Activated naive CD4-positive, alpha-beta T cell treated with anti-CD3 and anti-CD28 coated beads for 36 hours (primary cell): ENCODE measurements at regions of chr20 and their contacts with region 1.

Region 1: GRCh38 chr20:54284934-54285704 is 77.2 kb downstream of the PFDN4 start:
- DNase-seq: peak; percentile 72
- H3K4me3 Mint-ChIP-seq: peak overlapping the region; percentile 85
- H3K27ac Mint-ChIP-seq: peak overlapping the region; percentile 99
- H3K4me1 Mint-ChIP-seq: peaks cover 29% of the 10 kb centered on the region
- H3K27me3 Mint-ChIP-seq: no peaks in the 10 kb centered on the region

Region 2: GRCh38 chr20:53594068-53595017 is 690.8 kb before region 1 on chr20:
- CTCF ChIA-PET with region 1: no interaction called
- intact Hi-C with region 1: loop called (anchors 10 kb)
- DNase-seq: peak; percentile 96
- H3K4me3 Mint-ChIP-seq: peak overlapping the region; percentile 94
- H3K27ac Mint-ChIP-seq: peak overlapping the region; percentile 99
- H3K4me1 Mint-ChIP-seq: peaks cover 51% of the 10 kb centered on the region
- H3K27me3 Mint-ChIP-seq: no peaks in the 10 kb centered on the region

Region 3: GRCh38 chr20:54207743-54208547 is 77.2 kb before region 1 on chr20 and contains the start of gene PFDN4:
- CTCF ChIA-PET with region 1: no interaction called
- intact Hi-C with region 1: loop called (anchors 1 kb)
- DNase-seq: peak; percentile 86
- H3K4me3 Mint-ChIP-seq: peak within 1 kb of the TSS; percentile 90
- H3K27ac Mint-ChIP-seq: peak within 1 kb of the TSS; percentile 98
- H3K4me1 Mint-ChIP-seq: peaks cover 42% of the 10 kb centered on the region
- H3K27me3 Mint-ChIP-seq: no peaks in the 10 kb centered on the region
- total RNA-seq, gene PFDN4: 48.8 to 53.3 TPM

Region 4: DNA sequence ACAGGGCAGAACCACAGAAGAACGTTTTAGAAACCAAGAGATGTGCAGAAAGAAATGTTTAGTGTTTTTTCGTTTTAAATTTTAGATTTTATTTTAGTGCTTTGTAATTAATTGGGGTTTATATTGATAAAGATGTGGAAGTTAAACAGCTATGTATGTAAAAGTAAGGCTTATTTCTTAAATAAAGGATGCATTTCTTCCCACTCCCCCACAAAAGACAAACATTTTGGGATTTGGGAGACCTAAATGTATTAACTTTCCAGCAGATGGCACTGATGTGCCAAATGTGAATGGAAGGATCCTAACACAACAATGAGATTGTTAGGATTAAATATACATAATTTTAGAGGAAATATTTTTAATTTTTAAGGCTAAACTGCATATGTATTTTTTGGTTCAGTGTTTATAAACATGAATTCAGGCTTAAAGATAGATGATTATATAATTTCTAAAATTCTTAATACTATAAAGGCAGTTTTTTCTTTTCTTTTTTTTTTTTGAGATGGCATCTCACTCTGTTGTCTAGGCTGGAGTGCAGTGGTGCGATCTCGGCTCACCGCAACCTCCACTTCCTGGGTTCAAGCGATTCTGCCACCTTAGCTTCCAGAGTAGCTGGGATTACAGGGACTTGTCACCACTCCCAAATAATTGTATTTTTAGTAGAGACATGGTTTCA is 65.2 kb before region 1 on chr20:
- CTCF ChIA-PET with region 1: no interaction called
- intact Hi-C with region 1: loop called (anchors 1 kb)
- DNase-seq: peak; percentile 33
- H3K4me3 Mint-ChIP-seq: no peak overlapping the region
- H3K27ac Mint-ChIP-seq: peak overlapping the region; percentile 85
- H3K4me1 Mint-ChIP-seq: peaks cover 40% of the 10 kb centered on the region
- H3K27me3 Mint-ChIP-seq: no peaks in the 10 kb centered on the region

Region 5: DNA sequence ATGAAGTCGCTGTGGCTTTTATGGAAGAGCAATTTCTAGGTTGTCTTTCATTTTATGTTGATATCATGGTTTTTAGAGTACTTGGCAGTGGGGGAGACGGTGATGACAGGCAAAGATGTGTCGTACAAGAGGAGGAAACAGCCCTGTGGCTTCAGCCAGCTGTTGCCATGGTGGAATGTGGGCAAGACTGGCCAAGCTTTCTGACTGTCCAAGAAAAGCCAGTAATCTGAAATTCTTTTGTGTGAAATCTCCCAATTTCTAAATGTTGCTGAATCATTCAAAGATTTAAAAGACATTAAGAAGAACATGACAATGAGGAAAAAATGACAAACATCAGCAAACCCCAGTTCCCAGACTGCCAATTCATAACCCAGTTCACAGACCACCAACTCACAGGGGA is 54.1 kb before region 1 on chr20:
- CTCF ChIA-PET with region 1: no interaction called
- intact Hi-C with region 1: no loop called
- DNase-seq: no peak
- H3K4me3 Mint-ChIP-seq: no peak overlapping the region
- H3K27ac Mint-ChIP-seq: no peak overlapping the region
- H3K4me1 Mint-ChIP-seq: peaks cover 2% of the 10 kb centered on the region
- H3K27me3 Mint-ChIP-seq: peaks cover 4% of the 10 kb centered on the region

Region 6: DNA sequence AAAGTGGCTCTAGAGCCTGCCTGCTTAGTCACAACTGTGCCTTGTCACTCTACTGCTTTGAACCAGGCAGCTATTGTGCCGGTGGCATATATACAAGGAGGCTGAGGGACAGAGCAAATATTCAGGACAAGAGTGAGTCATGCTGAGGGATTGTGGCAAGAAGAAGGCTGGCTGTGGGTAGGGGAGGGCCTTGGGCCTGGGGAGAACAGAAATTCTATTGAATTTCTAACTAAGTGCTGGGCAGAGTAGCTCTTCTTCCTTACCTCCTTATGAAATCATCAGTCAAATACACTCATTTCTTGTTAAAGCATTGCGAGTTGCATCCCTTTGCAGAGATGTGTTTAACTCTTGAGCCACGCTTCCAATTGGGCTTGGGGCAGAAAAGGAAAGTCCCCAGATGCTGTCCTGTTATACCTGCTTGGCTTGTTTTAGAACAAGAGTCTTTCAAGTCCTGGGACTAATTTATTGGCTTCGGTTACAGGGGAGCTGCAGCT is 17.6 kb before region 1 on chr20:
- CTCF ChIA-PET with region 1: interaction called, 3 read pairs
- intact Hi-C with region 1: loop called (anchors 1 kb)
- DNase-seq: peak; percentile 10
- H3K4me3 Mint-ChIP-seq: no peak overlapping the region
- H3K27ac Mint-ChIP-seq: no peak overlapping the region
- H3K4me1 Mint-ChIP-seq: peaks cover 30% of the 10 kb centered on the region
- H3K27me3 Mint-ChIP-seq: peaks cover 13% of the 10 kb centered on the region

Region 7: GRCh38 chr20:54295686-54296085 is 10.6 kb after region 1 on chr20:
- CTCF ChIA-PET with region 1: no interaction called
- intact Hi-C with region 1: no loop called
- DNase-seq: no peak
- H3K4me3 Mint-ChIP-seq: no peak overlapping the region
- H3K27ac Mint-ChIP-seq: no peak overlapping the region
- H3K4me1 Mint-ChIP-seq: peaks cover 26% of the 10 kb centered on the region
- H3K27me3 Mint-ChIP-seq: peaks cover 44% of the 10 kb centered on the region

Region 8: GRCh38 chr20:54312557-54312956 is 27.4 kb after region 1 on chr20:
- CTCF ChIA-PET with region 1: no interaction called
- intact Hi-C with region 1: loop called (anchors 1 kb)
- DNase-seq: no peak
- H3K4me3 Mint-ChIP-seq: peak overlapping the region; percentile 36
- H3K27ac Mint-ChIP-seq: peak overlapping the region; percentile 75
- H3K4me1 Mint-ChIP-seq: peaks cover 60% of the 10 kb centered on the region
- H3K27me3 Mint-ChIP-seq: peaks cover 7% of the 10 kb centered on the region

Region 9: DNA sequence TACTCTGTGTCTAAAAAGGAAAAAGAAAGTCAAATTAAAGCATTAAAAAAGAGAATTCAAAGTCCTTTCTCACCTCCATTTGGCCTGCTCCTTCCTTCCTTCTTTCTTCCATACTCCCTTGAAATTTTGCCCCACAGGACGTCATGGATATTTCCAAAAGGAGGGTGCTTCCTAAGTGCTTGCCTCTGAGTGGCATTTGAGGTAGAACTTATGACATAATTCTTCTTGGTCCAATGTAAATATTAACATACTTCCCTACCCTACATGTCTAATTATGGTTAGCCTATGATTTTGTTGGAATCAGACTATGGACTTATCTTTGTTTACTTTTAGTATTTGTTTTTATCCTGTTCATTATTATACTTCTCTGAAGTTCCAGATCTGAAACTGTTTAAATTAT is 55.1 kb after region 1 on chr20:
- CTCF ChIA-PET with region 1: no interaction called
- intact Hi-C with region 1: no loop called
- DNase-seq: no peak
- H3K4me3 Mint-ChIP-seq: no peak overlapping the region
- H3K27ac Mint-ChIP-seq: no peak overlapping the region
- H3K4me1 Mint-ChIP-seq: peaks cover 5% of the 10 kb centered on the region
- H3K27me3 Mint-ChIP-seq: peaks cover 17% of the 10 kb centered on the region

Region 10: DNA sequence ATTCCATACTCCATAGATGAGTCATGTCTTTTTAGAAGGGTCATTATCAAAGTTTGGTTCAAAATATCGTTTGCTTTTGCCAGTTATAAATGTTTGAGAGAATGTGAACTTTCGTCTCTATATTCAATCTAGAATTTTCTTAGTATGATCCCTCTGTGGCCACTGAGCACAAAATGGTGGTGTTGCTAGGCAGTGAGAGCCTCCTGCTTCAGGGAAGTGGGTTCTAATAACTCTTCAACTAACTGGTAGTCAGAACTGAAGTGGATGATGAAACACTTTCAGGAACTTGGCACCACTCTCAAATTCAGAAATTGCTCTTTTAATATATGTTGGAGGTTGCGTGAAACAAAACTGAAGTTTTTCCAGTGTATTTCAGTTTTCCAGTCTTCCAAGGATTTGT is 65.3 kb after region 1 on chr20:
- CTCF ChIA-PET with region 1: no interaction called
- intact Hi-C with region 1: loop called (anchors 2 kb)
- DNase-seq: peak; percentile 36
- H3K4me3 Mint-ChIP-seq: no peak overlapping the region
- H3K27ac Mint-ChIP-seq: peak overlapping the region; percentile 39
- H3K4me1 Mint-ChIP-seq: peaks cover 32% of the 10 kb centered on the region
- H3K27me3 Mint-ChIP-seq: peaks cover 17% of the 10 kb centered on the region